Body of pancreas (tissue), 4 donors: ENCODE measurements at regions of chr9 and their contacts with region 1.

Region 1: GRCh38 chr9:68685770-68686169 is 19.3 kb upstream of the PIP5K1B start:
- DNase-seq: peak; percentile 53 to 74 (median 59)
- ATAC-seq: peak; percentile 68
- H3K4me3 ChIP-seq: no peak overlapping the region
- H3K27ac ChIP-seq: no peak overlapping the region
- H3K4me1 ChIP-seq: peaks cover 14% of the 10 kb centered on the region
- H3K27me3 ChIP-seq: no peaks in the 10 kb centered on the region
- CTCF ChIP-seq: peak; percentile 13 to 69 (median 51)
- POLR2A ChIP-seq: no peak

Region 2: GRCh38 chr9:68619636-68620035 is 66.1 kb before region 1 on chr9:
- intact Hi-C with region 1: loop called (anchors 10 kb)
- DNase-seq: no peak
- ATAC-seq: no peak
- H3K4me3 ChIP-seq: no peak overlapping the region
- H3K27ac ChIP-seq: no peak overlapping the region
- H3K4me1 ChIP-seq: no peaks in the 10 kb centered on the region
- H3K27me3 ChIP-seq: no peaks in the 10 kb centered on the region
- CTCF ChIP-seq: no peak
- POLR2A ChIP-seq: no peak